Posterior cingulate gyrus (tissue), 11 donors: ENCODE measurements at regions of chr21 and their contacts with region 1.

Region 1: DNA sequence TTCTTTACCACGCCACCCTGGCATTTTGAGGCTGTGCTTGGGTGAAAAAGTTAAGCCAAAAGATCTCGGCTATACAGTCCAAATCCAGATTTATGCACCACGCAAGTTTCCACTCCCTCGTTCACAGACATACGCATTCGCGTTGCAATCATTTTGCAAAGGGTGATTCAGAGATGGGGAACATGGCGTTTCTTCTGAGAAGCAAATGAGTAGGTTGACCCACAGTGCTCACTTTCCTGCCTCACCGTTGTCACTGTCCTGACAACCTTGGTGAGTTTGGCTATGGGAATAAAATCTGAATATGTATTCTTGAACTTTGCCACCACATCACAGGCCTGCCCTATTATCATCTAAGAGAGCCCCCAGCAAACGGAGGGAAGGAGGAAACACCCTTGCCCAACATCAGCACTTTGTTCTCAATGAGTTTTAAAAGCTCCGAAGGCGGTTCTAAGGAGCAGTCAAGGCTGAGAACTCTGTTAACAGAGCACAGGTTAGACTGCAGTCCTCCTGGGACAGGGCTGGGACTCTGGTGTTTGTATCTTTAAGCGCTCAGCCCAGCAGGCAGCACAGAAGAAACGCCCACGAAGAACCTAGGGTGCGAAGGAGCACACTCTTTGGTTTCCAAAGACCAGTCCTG is 86.4 kb downstream of the RUNX1 start:
- DNase-seq: no peak

Region 2: GRCh38 chr21:34974162-34974981 is 11.7 kb after region 1 on chr21:
- intact Hi-C with region 1: loop called (anchors 1 kb)
- DNase-seq: no peak